Natural killer cell (primary cell): ENCODE measurements at regions of chr1 and their contacts with region 1.

Region 1: GRCh38 chr1:46603858-46604549 is at the start of gene MKNK1:
- DNase-seq: peak; percentile 98 to 100
- ATAC-seq: peak; percentile 97 to 99 (median 98)
- H3K4me3 ChIP-seq: peak within 1 kb of the TSS; percentile 79
- H3K4me3 Mint-ChIP-seq: peak within 1 kb of the TSS; percentile 95
- H3K27ac ChIP-seq: peak within 1 kb of the TSS; percentile 58
- H3K27ac Mint-ChIP-seq: peak within 1 kb of the TSS; percentile 89 to 90
- H3K4me1 ChIP-seq: peaks cover 27% of the 10 kb centered on the region
- H3K4me1 Mint-ChIP-seq: peaks cover 55 to 58% of the 10 kb centered on the region in 2 donors
- H3K27me3 ChIP-seq: no peaks in the 10 kb centered on the region
- H3K27me3 Mint-ChIP-seq: no peaks in the 10 kb centered on the region
- CTCF ChIP-seq: no peak
- total RNA-seq, gene MKNK1: 59.5 to 81.5 (median 65.5) TPM

Region 2: GRCh38 chr1:46532498-46533178 is 71.4 kb before region 1 on chr1:
- intact Hi-C with region 1: no loop called
- DNase-seq: peak; percentile 60 to 81
- ATAC-seq: peak; percentile 83 to 87 (median 87)
- H3K4me3 ChIP-seq: no peak overlapping the region
- H3K4me3 Mint-ChIP-seq: peak overlapping the region; percentile 61
- H3K27ac ChIP-seq: peak overlapping the region; percentile 5
- H3K27ac Mint-ChIP-seq: no peak overlapping the region
- H3K4me1 ChIP-seq: peaks cover 13% of the 10 kb centered on the region
- H3K4me1 Mint-ChIP-seq: peaks cover 5 to 6% of the 10 kb centered on the region in 2 donors
- H3K27me3 ChIP-seq: peaks cover 6% of the 10 kb centered on the region
- H3K27me3 Mint-ChIP-seq: peaks cover 26 to 36% of the 10 kb centered on the region in 2 donors
- CTCF ChIP-seq: peak; percentile 54

Region 3: GRCh38 chr1:46718727-46719622 is 115.0 kb after region 1 on chr1 and contains the start of gene EFCAB14:
- intact Hi-C with region 1: loop called (anchors 2 kb)
- DNase-seq: peak; percentile 99 to 100
- ATAC-seq: peak; percentile 95 to 96 (median 96)
- H3K4me3 ChIP-seq: peak within 1 kb of the TSS; percentile 90
- H3K4me3 Mint-ChIP-seq: peak within 1 kb of the TSS; percentile 94
- H3K27ac ChIP-seq: peak within 1 kb of the TSS; percentile 69
- H3K27ac Mint-ChIP-seq: peak within 1 kb of the TSS; percentile 84 to 95
- H3K4me1 ChIP-seq: peaks cover 25% of the 10 kb centered on the region
- H3K4me1 Mint-ChIP-seq: peaks cover 32 to 45% of the 10 kb centered on the region in 2 donors
- H3K27me3 ChIP-seq: no peaks in the 10 kb centered on the region
- H3K27me3 Mint-ChIP-seq: no peaks in the 10 kb centered on the region
- CTCF ChIP-seq: no peak
- total RNA-seq, gene EFCAB14: 77.7 to 130 (median 119) TPM

Region 4: DNA sequence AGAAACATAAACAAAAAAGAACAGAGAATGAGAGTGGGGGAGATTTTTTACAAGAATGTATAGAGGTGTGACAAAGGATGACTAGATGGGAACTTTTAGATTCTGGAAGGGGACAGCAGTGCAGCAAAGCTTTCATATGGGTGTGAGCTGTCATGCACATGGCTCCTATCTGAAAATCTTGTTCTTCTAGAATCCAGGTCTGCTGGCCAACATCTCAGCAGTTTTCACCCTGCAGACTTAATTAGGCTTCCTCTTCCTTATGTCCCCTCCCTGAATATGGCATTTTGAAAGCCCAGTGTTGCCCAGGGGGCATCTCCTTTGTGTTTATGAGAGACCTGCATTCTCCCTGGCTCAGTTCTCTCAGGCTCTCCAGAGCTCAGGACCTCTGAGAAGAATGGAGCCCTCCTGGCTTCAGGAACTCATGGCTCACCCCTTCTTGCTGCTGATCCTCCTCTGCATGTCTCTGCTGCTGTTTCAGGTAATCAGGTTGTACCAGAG is 463.1 kb after region 1 on chr1 and contains the start of gene CYP4Z1:
- intact Hi-C with region 1: no loop called
- DNase-seq: no peak
- ATAC-seq: no peak
- H3K4me3 ChIP-seq: no peak within 1 kb of the TSS
- H3K4me3 Mint-ChIP-seq: no peak within 1 kb of the TSS
- H3K27ac ChIP-seq: no peak within 1 kb of the TSS
- H3K27ac Mint-ChIP-seq: no peak within 1 kb of the TSS
- H3K4me1 ChIP-seq: no peaks in the 10 kb centered on the region
- H3K4me1 Mint-ChIP-seq: no peaks in the 10 kb centered on the region
- H3K27me3 ChIP-seq: peaks cover 2% of the 10 kb centered on the region
- H3K27me3 Mint-ChIP-seq: peaks cover 16 to 34% of the 10 kb centered on the region in 2 donors
- CTCF ChIP-seq: no peak
- total RNA-seq, gene CYP4Z1: not detected